ENCODE measurements at regions of chr2 and their contacts with region 1.

Region 1: GRCh38 chr2:121974897-121975661 is 219.6 kb downstream of the TSN start:
- H3K4me3 Mint-ChIP-seq: peak overlapping the region; percentile 49
- H3K27ac Mint-ChIP-seq: peak overlapping the region; percentile 49
- H3K4me1 Mint-ChIP-seq: peaks cover 19% of the 10 kb centered on the region
- H3K27me3 Mint-ChIP-seq: no peaks in the 10 kb centered on the region

Region 2: DNA sequence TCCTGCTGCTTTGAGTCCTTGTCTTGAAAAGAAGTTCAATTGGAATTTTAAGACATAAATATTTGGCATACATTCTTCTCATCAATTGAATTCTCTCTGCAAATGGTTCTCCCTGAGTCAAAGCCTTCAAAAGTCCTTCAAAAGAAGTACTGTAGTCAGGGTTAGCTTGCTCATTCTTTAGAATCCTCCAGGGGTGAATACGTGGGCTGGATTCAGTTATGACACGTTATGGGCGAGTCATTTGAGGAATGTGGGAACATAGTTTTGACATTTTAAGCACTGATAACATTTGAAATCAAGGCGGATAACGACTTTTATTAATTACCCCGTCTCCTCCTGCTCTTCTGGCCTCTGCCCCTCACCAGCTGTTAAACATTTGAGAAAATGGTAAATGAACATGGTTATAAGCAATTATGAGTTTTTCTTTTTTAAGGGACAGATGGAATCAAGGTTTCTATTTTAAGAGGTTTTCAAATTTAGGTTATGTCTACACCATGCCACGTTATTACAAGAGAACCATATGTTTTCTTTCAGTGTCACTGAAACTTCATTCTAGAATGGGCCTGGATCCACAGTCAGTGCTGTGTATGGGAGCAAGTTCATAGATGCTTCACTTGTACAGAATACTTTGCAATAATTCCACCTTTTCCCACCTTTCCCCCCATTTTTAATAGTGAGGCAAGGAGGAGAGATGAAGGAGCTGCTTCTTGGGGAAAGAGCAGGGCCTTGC is 53.5 kb after region 1 on chr2:
- intact Hi-C with region 1: no loop called
- H3K4me3 Mint-ChIP-seq: no peak overlapping the region
- H3K27ac Mint-ChIP-seq: no peak overlapping the region
- H3K4me1 Mint-ChIP-seq: no peaks in the 10 kb centered on the region
- H3K27me3 Mint-ChIP-seq: peaks cover 4% of the 10 kb centered on the region

Region 3: DNA sequence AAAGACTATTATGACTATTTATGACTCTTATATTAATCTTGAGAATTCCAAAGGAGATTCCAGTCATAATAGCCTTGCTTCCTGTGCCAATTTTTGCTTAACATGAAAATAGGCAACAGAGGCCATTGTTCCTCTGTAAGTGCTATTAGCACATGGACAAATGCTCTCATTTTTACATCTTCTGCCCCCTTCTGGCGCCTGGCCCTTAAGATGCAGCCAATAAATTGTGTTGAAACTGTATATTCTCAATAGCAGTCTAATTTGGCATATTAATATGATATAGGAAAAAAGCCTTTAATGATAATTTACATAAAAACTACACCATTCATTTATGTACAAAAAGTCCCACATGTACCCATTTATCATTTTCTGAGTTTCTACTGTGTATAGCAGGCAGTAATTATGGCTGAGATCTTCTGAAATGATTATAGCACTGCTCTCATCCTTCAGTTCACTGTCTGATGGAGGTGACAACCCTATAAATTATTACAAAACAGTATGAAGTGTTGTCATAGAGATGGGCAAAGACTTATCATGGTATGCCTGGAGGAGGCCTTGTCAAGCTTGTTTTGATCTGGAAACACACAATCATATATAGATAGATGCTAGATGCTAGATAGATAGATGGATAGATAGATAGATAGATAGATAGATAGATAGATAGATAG is 393.6 kb after region 1 on chr2:
- intact Hi-C with region 1: loop called (anchors 5 kb)
- H3K4me3 Mint-ChIP-seq: no peak overlapping the region
- H3K27ac Mint-ChIP-seq: no peak overlapping the region
- H3K4me1 Mint-ChIP-seq: no peaks in the 10 kb centered on the region
- H3K27me3 Mint-ChIP-seq: no peaks in the 10 kb centered on the region

Region 4: DNA sequence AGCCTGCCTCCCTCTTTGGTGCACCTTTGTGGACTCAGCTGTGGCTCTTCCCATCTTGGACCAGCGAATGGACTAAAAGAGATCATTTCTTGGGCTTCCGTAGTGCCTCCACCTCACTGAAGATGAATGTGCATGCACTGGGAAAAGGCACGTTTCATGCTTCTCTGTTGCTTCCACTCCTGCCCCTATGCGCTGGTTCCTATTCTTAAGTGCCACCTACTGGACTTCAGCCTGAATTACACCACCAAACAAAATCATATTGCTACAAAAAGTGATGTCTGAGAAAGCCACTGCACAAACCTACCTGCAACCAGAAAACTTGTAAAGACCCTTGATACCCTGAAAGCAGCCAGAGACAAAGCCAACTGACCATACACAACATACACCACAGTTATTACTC is 476.0 kb after region 1 on chr2:
- intact Hi-C with region 1: loop called (anchors 2 kb)
- H3K4me3 Mint-ChIP-seq: no peak overlapping the region
- H3K27ac Mint-ChIP-seq: no peak overlapping the region
- H3K4me1 Mint-ChIP-seq: no peaks in the 10 kb centered on the region
- H3K27me3 Mint-ChIP-seq: no peaks in the 10 kb centered on the region